WTC11 (cell line): ENCODE measurements at regions of chr20 and their contacts with region 1.

Region 1: GRCh38 chr20:41136680-41137613 is at the start of gene PLCG1:
- DNase-seq: peak; percentile 92
- ATAC-seq: peak; percentile 67
- H3K4me3 Mint-ChIP-seq: peak within 1 kb of the TSS; percentile 89
- H3K27ac Mint-ChIP-seq: peak within 1 kb of the TSS; percentile 83
- H3K4me1 Mint-ChIP-seq: peaks cover 50% of the 10 kb centered on the region
- H3K27me3 Mint-ChIP-seq: peaks cover 13% of the 10 kb centered on the region
- CTCF ChIP-seq: no peak
- total RNA-seq, gene PLCG1: 177 to 201 TPM (median 194 TPM) in 3 replicates

Region 2: DNA sequence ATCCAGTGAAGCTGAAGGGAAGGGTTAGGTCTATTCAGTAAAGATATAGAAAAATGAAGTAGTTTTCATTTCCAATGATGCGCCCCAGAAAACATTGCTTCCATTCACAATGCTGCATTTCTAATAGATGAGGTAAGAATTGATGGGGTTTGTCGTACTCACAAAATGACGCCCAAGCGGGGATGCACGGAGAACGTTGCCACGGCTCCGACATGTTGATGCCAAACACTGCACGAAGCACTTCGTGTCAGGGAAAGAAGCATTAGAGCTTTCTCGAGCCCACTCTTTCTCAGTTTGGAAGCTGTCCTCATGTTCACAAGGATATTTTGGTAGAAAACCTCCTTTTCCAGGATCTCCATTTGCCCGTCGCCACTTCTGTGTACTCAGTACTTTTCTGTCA is 426.3 kb before region 1 on chr20:
- CTCF ChIA-PET with region 1: no interaction called
- POLR2A ChIA-PET with region 1: no interaction called
- DNase-seq: no peak
- ATAC-seq: no peak
- H3K4me3 Mint-ChIP-seq: no peak overlapping the region
- H3K27ac Mint-ChIP-seq: no peak overlapping the region
- H3K4me1 Mint-ChIP-seq: peaks cover 4% of the 10 kb centered on the region
- H3K27me3 Mint-ChIP-seq: no peaks in the 10 kb centered on the region
- CTCF ChIP-seq: no peak

Region 3: DNA sequence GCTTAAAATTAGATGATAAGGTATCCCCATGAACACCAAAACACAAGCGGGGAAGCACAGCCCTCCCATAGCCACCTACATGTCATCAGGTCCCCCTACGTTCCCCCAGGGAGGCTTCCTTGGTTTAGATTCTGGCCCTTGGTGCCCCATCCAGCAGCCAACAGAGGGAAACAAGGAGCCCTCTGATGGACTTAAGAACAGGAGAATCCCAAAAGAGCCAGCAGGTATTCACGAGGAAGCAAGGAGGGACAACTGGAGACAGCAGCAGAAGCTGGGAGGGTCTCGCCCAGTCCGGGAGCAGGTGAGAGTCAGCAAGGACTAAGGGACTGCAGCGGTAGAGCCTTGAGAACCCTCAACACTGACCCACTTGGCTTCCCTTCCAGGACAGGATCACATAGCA is 166.7 kb before region 1 on chr20:
- CTCF ChIA-PET with region 1: interaction called, 26 read pairs
- POLR2A ChIA-PET with region 1: no interaction called
- DNase-seq: no peak
- ATAC-seq: peak; percentile 36
- H3K4me3 Mint-ChIP-seq: no peak overlapping the region
- H3K27ac Mint-ChIP-seq: no peak overlapping the region
- H3K4me1 Mint-ChIP-seq: peaks cover 19% of the 10 kb centered on the region
- H3K27me3 Mint-ChIP-seq: peaks cover 12% of the 10 kb centered on the region
- CTCF ChIP-seq: no peak

Region 4: DNA sequence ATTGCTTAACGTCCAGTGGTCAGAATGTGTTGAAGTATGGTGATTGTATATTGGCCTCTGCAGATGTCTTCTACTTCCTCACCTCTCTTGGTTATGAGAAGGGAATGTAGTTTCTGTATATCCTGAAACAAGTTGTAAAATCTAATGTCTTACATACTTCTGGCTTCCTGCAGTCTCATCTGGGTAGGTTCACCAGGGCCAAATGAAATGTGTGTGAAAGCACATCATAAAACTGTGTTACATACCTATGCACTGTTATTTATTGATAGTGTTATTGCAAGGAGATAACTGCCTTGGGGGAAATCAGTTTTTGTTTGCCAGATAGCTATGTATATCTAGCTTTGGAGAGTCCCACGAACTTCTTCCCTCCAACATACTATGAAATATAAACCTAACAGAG is 35.3 kb before region 1 on chr20:
- CTCF ChIA-PET with region 1: no interaction called
- POLR2A ChIA-PET with region 1: no interaction called
- DNase-seq: no peak
- ATAC-seq: no peak
- H3K4me3 Mint-ChIP-seq: no peak overlapping the region
- H3K27ac Mint-ChIP-seq: no peak overlapping the region
- H3K4me1 Mint-ChIP-seq: no peaks in the 10 kb centered on the region
- H3K27me3 Mint-ChIP-seq: no peaks in the 10 kb centered on the region
- CTCF ChIP-seq: no peak

Region 5: GRCh38 chr20:41119546-41120235 is 17.3 kb before region 1 on chr20:
- CTCF ChIA-PET with region 1: interaction called, 16 read pairs
- POLR2A ChIA-PET with region 1: no interaction called
- DNase-seq: no peak
- ATAC-seq: no peak
- H3K4me3 Mint-ChIP-seq: no peak overlapping the region
- H3K27ac Mint-ChIP-seq: no peak overlapping the region
- H3K4me1 Mint-ChIP-seq: no peaks in the 10 kb centered on the region
- H3K27me3 Mint-ChIP-seq: no peaks in the 10 kb centered on the region
- CTCF ChIP-seq: no peak

Region 6: GRCh38 chr20:41149679-41150131 is 12.8 kb after region 1 on chr20:
- CTCF ChIA-PET with region 1: interaction called, 50 read pairs
- POLR2A ChIA-PET with region 1: interaction called, 4 read pairs
- DNase-seq: no peak
- ATAC-seq: no peak
- H3K4me3 Mint-ChIP-seq: no peak overlapping the region
- H3K27ac Mint-ChIP-seq: no peak overlapping the region
- H3K4me1 Mint-ChIP-seq: peaks cover 51% of the 10 kb centered on the region
- H3K27me3 Mint-ChIP-seq: no peaks in the 10 kb centered on the region
- CTCF ChIP-seq: no peak

Region 7: GRCh38 chr20:41191562-41192500 is 54.9 kb after region 1 on chr20:
- CTCF ChIA-PET with region 1: interaction called, 17 read pairs
- POLR2A ChIA-PET with region 1: no interaction called
- DNase-seq: no peak
- ATAC-seq: no peak
- H3K4me3 Mint-ChIP-seq: no peak overlapping the region
- H3K27ac Mint-ChIP-seq: no peak overlapping the region
- H3K4me1 Mint-ChIP-seq: no peaks in the 10 kb centered on the region
- H3K27me3 Mint-ChIP-seq: no peaks in the 10 kb centered on the region; the same call in 1 of the 2 replicates
- CTCF ChIP-seq: no peak

Region 8: DNA sequence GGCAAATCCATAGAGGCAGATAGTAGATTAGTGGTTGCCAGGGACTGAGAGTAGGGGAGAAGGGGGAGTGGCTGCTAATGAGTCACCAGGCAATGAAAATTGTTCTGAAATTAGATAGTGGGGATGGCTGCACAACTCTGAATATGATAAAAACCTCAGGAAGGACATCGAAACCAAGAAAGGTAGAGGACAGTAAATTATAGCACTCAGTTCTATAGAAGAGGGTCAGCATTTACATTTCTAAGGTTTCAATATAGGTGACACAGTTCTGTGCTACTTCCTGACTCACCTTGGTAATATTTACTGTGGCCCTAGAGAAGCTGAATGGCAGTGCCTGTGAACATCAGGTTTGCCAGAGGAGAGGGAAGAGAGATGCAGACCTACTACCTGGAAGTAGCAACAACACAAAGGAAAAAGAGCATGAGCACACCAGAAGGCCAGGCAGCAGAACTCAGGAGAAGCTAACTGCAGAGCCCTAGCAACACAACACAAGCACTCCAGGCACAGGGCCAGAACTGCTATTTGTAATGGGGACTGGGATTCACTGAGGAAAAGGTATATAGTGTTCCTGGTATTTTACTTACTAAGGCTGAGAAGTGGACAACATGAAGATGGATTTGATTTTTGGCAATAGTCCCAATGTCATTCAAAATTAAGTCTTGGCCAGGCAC is 76.3 kb after region 1 on chr20:
- CTCF ChIA-PET with region 1: no interaction called
- POLR2A ChIA-PET with region 1: no interaction called
- DNase-seq: no peak
- ATAC-seq: no peak
- H3K4me3 Mint-ChIP-seq: no peak overlapping the region
- H3K27ac Mint-ChIP-seq: no peak overlapping the region
- H3K4me1 Mint-ChIP-seq: no peaks in the 10 kb centered on the region
- H3K27me3 Mint-ChIP-seq: no peaks in the 10 kb centered on the region; the same call in 1 of the 2 replicates
- CTCF ChIP-seq: no peak

Region 9: DNA sequence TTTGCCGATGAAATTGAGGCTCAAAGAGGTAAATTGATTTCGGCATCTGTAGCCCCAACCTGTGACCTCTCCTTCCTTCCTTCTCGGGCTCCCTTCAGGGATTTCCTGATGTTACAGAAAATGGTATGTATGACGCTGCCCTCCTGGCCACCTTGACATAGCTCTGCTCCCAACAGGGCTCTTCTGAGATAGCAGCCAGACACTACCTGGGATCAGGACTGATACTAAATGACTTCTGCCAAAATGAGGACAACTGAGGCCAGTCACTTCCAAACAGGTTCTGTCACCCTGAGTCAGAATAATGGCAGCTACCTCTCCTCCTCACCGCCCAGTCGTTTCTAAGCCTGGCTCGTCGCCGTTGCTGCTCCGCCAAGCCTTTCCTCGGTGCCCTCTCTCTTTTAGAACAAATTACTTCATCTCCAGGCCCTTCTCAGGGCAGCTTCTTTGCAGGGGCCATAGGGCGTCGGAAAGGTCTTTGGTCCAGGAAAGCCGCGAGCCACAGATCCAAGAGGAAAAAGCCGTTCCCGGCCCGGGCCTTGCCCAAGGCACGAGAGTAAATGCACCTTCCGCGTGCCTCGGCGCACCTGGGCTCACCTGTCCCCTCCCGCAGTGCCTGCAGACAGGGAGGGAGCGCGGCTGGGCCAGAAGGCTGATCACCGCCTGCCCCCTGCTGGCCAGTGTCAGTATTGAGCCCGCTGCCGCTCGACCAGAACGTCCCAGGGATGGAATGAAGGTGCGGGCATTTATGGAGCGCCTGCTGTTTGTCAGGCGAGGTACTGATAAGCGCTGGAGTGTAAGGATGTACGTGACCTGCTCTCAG is 202.8 kb after region 1 on chr20:
- CTCF ChIA-PET with region 1: interaction called, 93 read pairs
- POLR2A ChIA-PET with region 1: interaction called, 3 read pairs
- DNase-seq: peak; percentile 98
- ATAC-seq: peak; percentile 77
- H3K4me3 Mint-ChIP-seq: peak overlapping the region; percentile 80
- H3K27ac Mint-ChIP-seq: peak overlapping the region; percentile 92
- H3K4me1 Mint-ChIP-seq: peaks cover 6% of the 10 kb centered on the region
- H3K27me3 Mint-ChIP-seq: peaks cover 8% of the 10 kb centered on the region
- CTCF ChIP-seq: peak; percentile 99